Common myeloid progenitor, CD34-positive (primary cell): ENCODE measurements at regions of chr9 and their contacts with region 1.

Region 1: GRCh38 chr9:131467214-131467935 is 35.3 kb upstream of the POMT1 start:
- DNase-seq: no peak
- H3K4me3 ChIP-seq: no peak overlapping the region
- H3K27ac ChIP-seq: no peak overlapping the region
- H3K4me1 ChIP-seq: peaks cover 0 to 6% (median 2%) of the 10 kb centered on the region in 4 experiments
- H3K27me3 ChIP-seq: no peaks in the 10 kb centered on the region

Region 2: GRCh38 chr9:131478421-131478868 is 11.1 kb after region 1 on chr9:
- CTCF ChIA-PET with region 1: interaction called, 12 read pairs
- POLR2A ChIA-PET with region 1: no interaction called
- DNase-seq: peak; percentile 44 to 66 (median 58)
- H3K4me3 ChIP-seq: no peak overlapping the region
- H3K27ac ChIP-seq: no peak overlapping the region
- H3K4me1 ChIP-seq: no peaks in the 10 kb centered on the region
- H3K27me3 ChIP-seq: no peaks in the 10 kb centered on the region